ENCODE measurements at regions of chr10 and their contacts with region 1.

Region 1: DNA sequence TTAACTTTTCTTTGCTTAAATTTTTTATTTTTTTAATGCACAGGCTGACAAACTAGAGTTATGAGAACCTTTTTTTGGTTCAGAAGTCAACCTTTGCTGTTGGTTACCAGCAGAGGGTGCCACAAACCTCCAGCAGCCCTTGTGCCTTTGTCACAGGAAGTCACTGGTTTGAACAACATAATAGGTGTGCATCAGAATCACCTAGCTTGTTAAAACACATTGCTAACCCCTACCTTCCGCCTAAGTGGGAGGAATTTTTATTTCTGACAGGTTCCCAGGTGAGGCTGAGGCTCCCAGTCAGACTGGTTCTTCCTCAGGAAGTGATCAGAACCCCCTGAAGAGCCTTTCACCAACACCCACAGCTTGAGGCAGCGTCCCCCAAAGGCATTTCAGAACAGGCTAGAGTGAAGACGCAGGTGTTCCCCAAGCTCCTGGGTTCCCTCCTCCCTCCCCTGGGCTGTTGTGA is 22.6 kb upstream of the VDAC2 start:
- DNase-seq: peak; percentile 75
- H3K4me3 ChIP-seq: no peak overlapping the region
- H3K27ac ChIP-seq: no peak overlapping the region
- H3K4me1 ChIP-seq: peaks cover 13% of the 10 kb centered on the region
- H3K27me3 ChIP-seq: no peaks in the 10 kb centered on the region
- CTCF ChIP-seq: peak; percentile 83 to 92

Region 2: GRCh38 chr10:75111367-75111906 is 76.6 kb before region 1 on chr10 and contains the start of gene SAMD8:
- CTCF ChIA-PET with region 1: interaction called, 12 read pairs
- dilution Hi-C with region 1: no loop called
- in situ Hi-C with region 1: no loop called
- intact Hi-C with region 1: loop called (anchors 5 kb)
- DNase-seq: peak; percentile 93
- H3K4me3 ChIP-seq: peak within 1 kb of the TSS; percentile 91 to 98 (median 95)
- H3K27ac ChIP-seq: peak within 1 kb of the TSS; percentile 77
- H3K4me1 ChIP-seq: peaks cover 20% of the 10 kb centered on the region
- H3K27me3 ChIP-seq: no peaks in the 10 kb centered on the region
- CTCF ChIP-seq: peak in 1 of 2 donors; percentile 14
- total RNA-seq, gene SAMD8: 30.1 to 39.5 TPM

Region 3: GRCh38 chr10:75210282-75211006 is 22.4 kb after region 1 on chr10 and contains the start of gene VDAC2:
- CTCF ChIA-PET with region 1: interaction called, 4 read pairs
- dilution Hi-C with region 1: no loop called
- in situ Hi-C with region 1: no loop called
- intact Hi-C with region 1: loop called (anchors 1 kb)
- DNase-seq: peak; percentile 89
- H3K4me3 ChIP-seq: peak within 1 kb of the TSS; percentile 61 to 98 (median 95)
- H3K27ac ChIP-seq: peak within 1 kb of the TSS; percentile 93
- H3K4me1 ChIP-seq: peaks cover 54% of the 10 kb centered on the region
- H3K27me3 ChIP-seq: no peaks in the 10 kb centered on the region
- CTCF ChIP-seq: no peak
- total RNA-seq, gene VDAC2: 230 to 262 TPM

Region 4: DNA sequence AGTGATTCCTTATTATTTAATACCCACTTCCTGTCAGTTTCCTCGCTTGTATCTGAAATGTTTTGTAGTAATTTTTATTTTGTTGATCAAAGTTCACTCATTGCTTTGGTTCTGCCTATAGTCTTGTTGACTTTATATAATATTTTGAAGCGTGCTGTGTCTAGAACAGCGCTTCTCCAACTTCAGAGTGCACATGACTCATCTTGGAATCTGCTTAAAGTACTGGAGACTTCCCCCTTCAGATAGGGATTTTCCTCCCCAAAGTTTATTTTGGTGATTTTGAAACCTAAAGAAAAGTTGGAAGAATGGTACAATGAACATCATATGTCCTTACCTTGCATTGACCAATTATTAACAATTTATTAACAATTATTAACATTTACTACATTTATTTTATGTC is 42.0 kb after region 1 on chr10:
- CTCF ChIA-PET with region 1: interaction called, 8 read pairs
- dilution Hi-C with region 1: no loop called
- in situ Hi-C with region 1: loop called (anchors 5 kb)
- intact Hi-C with region 1: loop called (anchors 1 kb)
- DNase-seq: no peak
- H3K4me3 ChIP-seq: no peak overlapping the region
- H3K27ac ChIP-seq: no peak overlapping the region
- H3K4me1 ChIP-seq: peaks cover 52% of the 10 kb centered on the region
- H3K27me3 ChIP-seq: no peaks in the 10 kb centered on the region
- CTCF ChIP-seq: no peak

Measured in mammary epithelial cell (primary cell).